B cell (primary cell): ENCODE measurements at regions of chr17 and their contacts with region 1.

Region 1: GRCh38 chr17:21511363-21512198 is 135.4 kb downstream of the KCNJ12 start:
- DNase-seq: peak; percentile 81
- ATAC-seq: peak; percentile 79
- H3K4me3 ChIP-seq: peak overlapping the region; percentile 7 to 69 (median 56)
- H3K4me3 Mint-ChIP-seq: peak overlapping the region; percentile 66
- H3K27ac ChIP-seq: peak overlapping the region in 1 of 2 donors; percentile 25
- H3K27ac Mint-ChIP-seq: peak overlapping the region; percentile 56
- H3K4me1 ChIP-seq: peaks cover 15 to 22% of the 10 kb centered on the region in 2 donors
- H3K4me1 Mint-ChIP-seq: peaks cover 28% of the 10 kb centered on the region
- H3K27me3 ChIP-seq: peaks cover 0 to 17% (median 4%) of the 10 kb centered on the region in 4 experiments
- H3K27me3 Mint-ChIP-seq: peaks cover 31% of the 10 kb centered on the region
- CTCF ChIP-seq: peak; percentile 81

Region 2: DNA sequence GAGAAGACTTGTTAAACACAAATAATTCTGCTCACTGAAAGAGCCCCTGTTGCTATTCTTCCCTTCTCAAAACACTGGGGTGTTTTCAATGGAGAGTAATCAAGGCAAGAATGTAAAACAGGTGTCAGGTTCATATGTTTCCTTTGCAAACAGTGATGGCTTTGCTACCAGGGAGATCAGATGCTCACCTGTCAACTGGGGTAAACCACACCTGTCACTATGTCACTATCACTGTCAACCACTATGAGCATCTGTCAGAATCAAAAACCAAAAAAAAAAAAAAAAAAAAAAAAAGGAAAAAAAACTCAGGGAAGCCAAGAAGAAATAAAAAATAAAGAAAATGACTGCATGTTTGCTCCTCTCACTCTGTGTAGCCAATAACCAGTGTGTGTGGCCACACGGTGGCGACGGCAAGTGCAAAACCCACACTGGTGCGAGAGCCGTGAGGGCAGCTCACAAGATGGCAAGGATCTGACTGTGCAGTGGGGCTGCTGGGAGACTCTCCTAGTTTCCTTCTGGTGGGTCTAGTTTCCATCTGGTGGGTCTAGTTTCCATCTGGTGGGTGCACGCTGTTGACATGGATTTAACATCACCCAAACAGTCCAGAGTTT is 491.5 kb before region 1 on chr17:
- CTCF ChIA-PET with region 1: interaction called, 22 read pairs
- POLR2A ChIA-PET with region 1: interaction called, 3 read pairs
- intact Hi-C with region 1: loop called (anchors 1 kb)
- DNase-seq: peak; percentile 61
- ATAC-seq: peak; percentile 84
- H3K4me3 ChIP-seq: no peak overlapping the region
- H3K4me3 Mint-ChIP-seq: peak overlapping the region; percentile 60
- H3K27ac ChIP-seq: peak overlapping the region; percentile 5 to 29
- H3K27ac Mint-ChIP-seq: peak overlapping the region; percentile 82
- H3K4me1 ChIP-seq: peaks cover 10 to 28% of the 10 kb centered on the region in 2 donors
- H3K4me1 Mint-ChIP-seq: peaks cover 37% of the 10 kb centered on the region
- H3K27me3 ChIP-seq: no peaks in the 10 kb centered on the region
- H3K27me3 Mint-ChIP-seq: no peaks in the 10 kb centered on the region
- CTCF ChIP-seq: peak; percentile 48

Region 3: DNA sequence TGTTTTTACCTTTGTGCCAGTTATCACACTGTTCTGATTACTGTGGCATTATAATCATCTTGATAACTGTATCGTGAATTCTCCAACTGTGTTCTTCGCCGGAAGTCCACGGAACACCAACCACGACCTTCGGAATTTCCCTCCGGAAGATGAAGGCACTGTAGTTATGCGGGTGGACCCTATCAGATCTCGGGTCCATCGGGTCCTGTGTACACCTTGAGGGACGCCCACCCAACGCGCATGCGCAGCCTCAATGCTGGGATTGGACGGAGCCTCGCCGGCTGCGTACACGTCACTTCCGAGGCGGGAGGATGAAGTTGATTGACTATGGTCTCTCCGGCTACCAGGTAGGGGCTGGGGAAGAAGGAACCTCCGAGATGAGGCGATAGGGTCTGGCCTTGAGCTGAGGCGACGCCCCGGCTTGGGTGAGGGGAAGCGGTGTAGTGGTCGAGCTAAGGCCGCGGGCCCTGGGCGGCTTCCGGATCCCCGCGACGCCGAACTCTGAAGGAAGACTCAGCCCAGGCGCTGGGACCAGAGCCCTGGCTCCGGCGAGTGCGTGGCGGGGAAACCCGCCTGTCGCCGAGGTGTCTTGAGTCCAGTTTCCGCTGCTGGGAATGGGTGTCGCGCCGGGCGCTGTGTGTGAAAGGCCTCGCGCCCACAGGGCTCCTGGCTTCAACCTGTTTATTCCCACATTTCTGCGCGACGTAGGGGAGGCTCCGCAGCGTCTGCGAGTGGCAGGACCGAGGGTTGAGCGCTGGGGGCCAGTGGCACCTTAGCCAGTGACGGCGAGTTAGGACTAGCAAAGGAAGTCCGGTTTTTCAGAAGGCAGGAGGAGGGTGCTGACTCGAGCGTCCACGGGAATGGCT is 384.7 kb before region 1 on chr17 and contains the start of gene DHRS7B:
- CTCF ChIA-PET with region 1: interaction called, 144 read pairs
- POLR2A ChIA-PET with region 1: no interaction called
- intact Hi-C with region 1: no loop called
- DNase-seq: peak; percentile 97
- ATAC-seq: peak; percentile 93
- H3K4me3 ChIP-seq: peak within 1 kb of the TSS; percentile 64 to 92 (median 85)
- H3K4me3 Mint-ChIP-seq: peak within 1 kb of the TSS; percentile 95
- H3K27ac ChIP-seq: peak within 1 kb of the TSS; percentile 82 to 95
- H3K27ac Mint-ChIP-seq: peak within 1 kb of the TSS; percentile 91
- H3K4me1 ChIP-seq: peaks cover 19 to 22% of the 10 kb centered on the region in 2 donors
- H3K4me1 Mint-ChIP-seq: peaks cover 28% of the 10 kb centered on the region
- H3K27me3 ChIP-seq: peaks cover 0 to 3% (median 0%) of the 10 kb centered on the region in 4 experiments
- H3K27me3 Mint-ChIP-seq: no peaks in the 10 kb centered on the region
- CTCF ChIP-seq: no peak
- total RNA-seq, gene DHRS7B: 13.4 and 14.2 TPM in 2 replicates

Region 4: GRCh38 chr17:21284319-21285163 is 227.0 kb before region 1 on chr17 and contains the start of gene MAP2K3:
- CTCF ChIA-PET with region 1: interaction called, 170 read pairs
- POLR2A ChIA-PET with region 1: no interaction called
- intact Hi-C with region 1: no loop called
- DNase-seq: peak; percentile 98
- ATAC-seq: peak; percentile 66
- H3K4me3 ChIP-seq: peak within 1 kb of the TSS; percentile 81 to 98 (median 93)
- H3K4me3 Mint-ChIP-seq: peak within 1 kb of the TSS; percentile 96
- H3K27ac ChIP-seq: peak within 1 kb of the TSS; percentile 95
- H3K27ac Mint-ChIP-seq: peak within 1 kb of the TSS; percentile 99
- H3K4me1 ChIP-seq: peaks cover 58 to 78% of the 10 kb centered on the region in 2 donors
- H3K4me1 Mint-ChIP-seq: peaks cover 78% of the 10 kb centered on the region
- H3K27me3 ChIP-seq: no peaks in the 10 kb centered on the region
- H3K27me3 Mint-ChIP-seq: no peaks in the 10 kb centered on the region
- CTCF ChIP-seq: no peak
- total RNA-seq, gene MAP2K3: 114 and 118 TPM in 2 replicates

Region 5: DNA sequence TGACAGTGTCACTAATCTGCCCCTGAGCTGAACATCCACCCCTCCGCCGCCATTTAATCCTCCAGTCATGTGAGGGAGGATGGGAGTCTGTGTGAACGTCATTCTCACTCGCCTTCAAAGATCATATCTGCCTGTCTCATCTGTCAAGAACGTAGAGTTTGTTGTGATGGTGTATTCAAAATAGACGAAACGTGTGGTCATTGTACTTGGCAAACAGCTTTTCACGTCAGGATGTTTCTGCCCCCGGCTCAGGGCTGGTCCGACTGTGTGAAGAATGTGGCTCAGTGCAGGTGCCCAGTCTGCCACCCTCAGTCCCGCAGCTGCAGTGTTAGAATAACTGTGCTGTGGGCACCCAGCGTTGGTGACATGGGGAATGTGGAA is 12.6 kb after region 1 on chr17:
- CTCF ChIA-PET with region 1: interaction called, 13 read pairs
- POLR2A ChIA-PET with region 1: no interaction called
- intact Hi-C with region 1: no loop called
- DNase-seq: no peak
- ATAC-seq: no peak
- H3K4me3 ChIP-seq: no peak overlapping the region
- H3K4me3 Mint-ChIP-seq: no peak overlapping the region
- H3K27ac ChIP-seq: no peak overlapping the region
- H3K27ac Mint-ChIP-seq: no peak overlapping the region
- H3K4me1 ChIP-seq: no peaks in the 10 kb centered on the region
- H3K4me1 Mint-ChIP-seq: no peaks in the 10 kb centered on the region
- H3K27me3 ChIP-seq: peaks cover 0 to 12% (median 0%) of the 10 kb centered on the region in 4 experiments
- H3K27me3 Mint-ChIP-seq: peaks cover 16% of the 10 kb centered on the region
- CTCF ChIP-seq: no peak

Region 6: GRCh38 chr17:21573961-21574610 is 62.5 kb after region 1 on chr17:
- CTCF ChIA-PET with region 1: no interaction called
- POLR2A ChIA-PET with region 1: no interaction called
- intact Hi-C with region 1: no loop called
- DNase-seq: peak; percentile 53
- ATAC-seq: peak; percentile 24
- H3K4me3 ChIP-seq: peak overlapping the region in 3 of 5 experiments; percentile 32 to 49 (median 35)
- H3K4me3 Mint-ChIP-seq: peak overlapping the region; percentile 48
- H3K27ac ChIP-seq: no peak overlapping the region
- H3K27ac Mint-ChIP-seq: no peak overlapping the region
- H3K4me1 ChIP-seq: peaks cover 0 to 3% of the 10 kb centered on the region in 2 donors
- H3K4me1 Mint-ChIP-seq: no peaks in the 10 kb centered on the region
- H3K27me3 ChIP-seq: peaks cover 0 to 9% (median 0%) of the 10 kb centered on the region in 4 experiments
- H3K27me3 Mint-ChIP-seq: peaks cover 9% of the 10 kb centered on the region
- CTCF ChIP-seq: no peak